ENCODE measurements at regions of chr2 and their contacts with region 1.

Region 1: DNA sequence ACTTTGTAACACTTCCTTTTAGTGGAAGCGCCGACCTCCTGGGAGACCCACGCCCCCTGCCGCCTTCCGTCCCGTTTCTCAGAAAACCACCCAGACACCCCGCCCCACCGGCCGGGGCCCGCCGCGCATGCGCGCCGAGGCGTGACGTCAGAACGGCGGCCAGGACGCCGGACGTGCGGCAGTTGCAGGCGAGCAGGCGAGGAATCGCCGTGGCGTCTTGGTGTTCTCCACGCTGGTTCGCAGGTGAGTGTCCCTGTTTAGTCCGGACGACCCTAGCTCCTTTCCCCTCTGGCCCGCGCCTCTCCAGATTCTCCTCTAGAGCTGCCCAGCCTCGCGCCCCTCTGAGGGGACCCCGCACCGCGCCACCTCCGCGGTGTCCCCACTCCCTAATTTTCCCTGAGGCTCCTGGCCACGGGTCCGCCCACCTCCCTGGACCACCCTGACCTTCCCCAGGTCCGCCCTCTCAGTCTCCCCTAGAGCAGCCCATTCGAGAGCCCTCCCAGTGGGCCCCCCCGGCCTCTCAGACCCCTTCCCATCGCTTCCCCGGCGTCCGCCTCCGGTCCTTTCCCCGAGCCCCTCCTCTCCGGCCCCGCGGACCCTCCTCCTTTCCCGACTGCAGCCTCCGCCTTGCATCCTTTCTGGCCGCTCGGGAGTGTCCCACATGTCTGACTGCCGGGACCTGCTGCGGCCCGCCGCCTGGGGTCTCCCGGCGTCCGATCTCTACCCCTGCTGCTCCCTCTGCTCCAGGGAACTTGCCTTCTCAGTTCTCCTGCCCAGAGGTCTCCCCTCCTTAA is at the start of gene PLEKHB2:
- DNase-seq: peak; percentile 71 to 93
- H3K4me3 ChIP-seq: peak within 1 kb of the TSS; percentile 91
- H3K27ac ChIP-seq: peak within 1 kb of the TSS; percentile 91
- H3K4me1 ChIP-seq: peaks cover 22% of the 10 kb centered on the region
- H3K27me3 ChIP-seq: no peaks in the 10 kb centered on the region
- CTCF ChIP-seq: no peak
- total RNA-seq, gene PLEKHB2: 43.7 and 46.2 TPM in 2 replicates

Region 2: DNA sequence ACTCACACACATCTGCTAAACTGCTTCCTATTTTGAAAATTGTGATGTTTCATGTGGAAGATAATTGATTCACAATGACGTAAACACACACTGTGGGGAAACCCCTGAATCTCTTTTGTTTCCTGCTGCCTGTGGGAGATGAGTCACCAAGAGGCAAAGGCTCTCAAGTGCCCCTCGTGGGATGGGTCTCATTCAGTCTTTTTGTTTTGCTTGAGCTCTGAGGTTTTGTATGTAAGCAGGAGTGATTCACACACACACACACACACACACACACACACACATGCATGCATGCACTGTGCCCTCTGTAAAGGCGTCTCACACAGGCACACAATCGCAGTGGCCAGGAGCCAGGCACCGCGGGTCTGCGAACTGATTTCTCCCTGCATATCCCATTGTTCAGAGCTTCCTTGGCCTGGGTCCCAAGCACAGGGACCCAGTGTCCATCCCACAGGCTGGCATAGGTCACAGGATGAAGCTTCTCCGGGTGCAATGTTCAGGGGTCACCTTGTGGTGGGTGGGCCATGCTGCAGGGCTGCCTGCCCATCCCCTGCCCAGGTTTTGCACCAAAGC is 280.8 kb before region 1 on chr2:
- CTCF ChIA-PET with region 1: no interaction called
- POLR2A ChIA-PET with region 1: no interaction called
- intact Hi-C with region 1: loop called (anchors 10 kb)
- DNase-seq: peak; percentile 55 to 82
- H3K4me3 ChIP-seq: no peak overlapping the region
- H3K27ac ChIP-seq: peak overlapping the region; percentile 17
- H3K4me1 ChIP-seq: peaks cover 69% of the 10 kb centered on the region
- H3K27me3 ChIP-seq: no peaks in the 10 kb centered on the region
- CTCF ChIP-seq: no peak

Region 3: DNA sequence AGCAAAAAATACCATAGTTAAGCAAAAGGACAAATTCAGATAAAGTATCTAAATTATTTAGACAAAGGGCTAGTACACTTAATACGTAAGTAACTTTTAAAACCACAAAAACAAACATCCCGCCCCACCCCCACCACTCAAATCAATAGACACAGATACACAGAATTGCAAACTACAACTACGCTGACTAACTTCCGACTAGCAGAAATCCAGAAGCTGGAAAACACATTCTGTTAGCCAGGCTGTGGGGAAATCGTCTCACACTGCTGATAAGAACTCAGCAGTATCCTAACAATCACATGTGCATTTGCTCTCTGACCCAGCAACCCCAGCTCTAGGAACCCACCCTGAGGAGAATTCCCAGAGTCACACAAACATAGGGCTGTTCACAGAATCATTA is 28.6 kb before region 1 on chr2:
- CTCF ChIA-PET with region 1: no interaction called
- POLR2A ChIA-PET with region 1: no interaction called
- intact Hi-C with region 1: no loop called
- DNase-seq: no peak
- H3K4me3 ChIP-seq: no peak overlapping the region
- H3K27ac ChIP-seq: no peak overlapping the region
- H3K4me1 ChIP-seq: no peaks in the 10 kb centered on the region
- H3K27me3 ChIP-seq: no peaks in the 10 kb centered on the region
- CTCF ChIP-seq: no peak

Region 4: DNA sequence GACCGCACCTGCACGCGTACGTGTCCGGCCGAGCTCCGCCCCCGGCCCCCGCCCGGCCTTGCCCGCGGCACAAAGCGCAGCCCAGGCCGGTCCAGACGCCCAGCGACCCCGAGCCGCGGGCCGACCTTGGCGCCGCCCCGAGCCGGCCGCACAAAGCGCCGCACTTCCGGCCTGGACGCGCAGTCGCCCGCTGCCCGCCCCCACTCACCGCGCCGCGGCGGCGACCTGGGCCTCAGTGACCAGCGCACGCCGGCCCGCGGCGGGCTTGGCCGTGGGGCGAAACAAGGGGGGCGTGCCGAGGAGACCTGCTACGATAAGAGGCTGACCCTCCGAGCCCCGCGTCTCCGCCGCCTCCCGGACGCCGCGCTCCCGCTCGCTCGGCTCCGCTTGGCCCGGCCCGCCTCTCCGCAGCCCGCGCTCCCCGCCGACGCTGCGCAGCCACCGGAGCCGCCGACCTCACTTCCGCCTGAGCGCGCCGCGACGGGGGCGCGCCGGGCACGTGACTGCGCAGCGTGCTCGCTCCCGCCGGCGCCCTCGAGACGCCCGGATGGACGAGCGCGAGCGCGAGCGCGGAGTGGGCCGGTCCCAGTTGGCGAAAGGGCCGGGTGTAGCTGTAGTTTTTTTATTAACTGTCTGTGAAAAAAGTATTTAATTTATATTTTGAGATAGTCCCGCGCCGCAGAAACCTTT is 12.2 kb before region 1 on chr2 and contains the start of gene FAM168B:
- CTCF ChIA-PET with region 1: interaction called, 4 read pairs
- POLR2A ChIA-PET with region 1: no interaction called
- intact Hi-C with region 1: loop called (anchors 1 kb)
- DNase-seq: peak; percentile 57 to 89
- H3K4me3 ChIP-seq: peak within 1 kb of the TSS; percentile 99
- H3K27ac ChIP-seq: peak within 1 kb of the TSS; percentile 57
- H3K4me1 ChIP-seq: peaks cover 6% of the 10 kb centered on the region; the same call in 1 of the 2 replicates
- H3K27me3 ChIP-seq: no peaks in the 10 kb centered on the region
- CTCF ChIP-seq: no peak
- total RNA-seq, gene FAM168B: 66.6 and 79.6 TPM in 2 replicates